Naive thymus-derived CD4-positive, alpha-beta T cell (primary cell): ENCODE measurements at regions of chr6 and their contacts with region 1.

Region 1: GRCh38 chr6:17258749-17259148 is 22.4 kb upstream of the RBM24 start:
- DNase-seq: no peak
- ATAC-seq: no peak
- H3K4me3 ChIP-seq: no peak overlapping the region
- H3K4me3 Mint-ChIP-seq: no peak overlapping the region
- H3K27ac ChIP-seq: no peak overlapping the region
- H3K27ac Mint-ChIP-seq: no peak overlapping the region
- H3K4me1 ChIP-seq: no peaks in the 10 kb centered on the region
- H3K4me1 Mint-ChIP-seq: no peaks in the 10 kb centered on the region
- H3K27me3 ChIP-seq: no peaks in the 10 kb centered on the region
- H3K27me3 Mint-ChIP-seq: peaks cover 2 to 27% (median 16%) of the 10 kb centered on the region in 5 donors

Region 2: DNA sequence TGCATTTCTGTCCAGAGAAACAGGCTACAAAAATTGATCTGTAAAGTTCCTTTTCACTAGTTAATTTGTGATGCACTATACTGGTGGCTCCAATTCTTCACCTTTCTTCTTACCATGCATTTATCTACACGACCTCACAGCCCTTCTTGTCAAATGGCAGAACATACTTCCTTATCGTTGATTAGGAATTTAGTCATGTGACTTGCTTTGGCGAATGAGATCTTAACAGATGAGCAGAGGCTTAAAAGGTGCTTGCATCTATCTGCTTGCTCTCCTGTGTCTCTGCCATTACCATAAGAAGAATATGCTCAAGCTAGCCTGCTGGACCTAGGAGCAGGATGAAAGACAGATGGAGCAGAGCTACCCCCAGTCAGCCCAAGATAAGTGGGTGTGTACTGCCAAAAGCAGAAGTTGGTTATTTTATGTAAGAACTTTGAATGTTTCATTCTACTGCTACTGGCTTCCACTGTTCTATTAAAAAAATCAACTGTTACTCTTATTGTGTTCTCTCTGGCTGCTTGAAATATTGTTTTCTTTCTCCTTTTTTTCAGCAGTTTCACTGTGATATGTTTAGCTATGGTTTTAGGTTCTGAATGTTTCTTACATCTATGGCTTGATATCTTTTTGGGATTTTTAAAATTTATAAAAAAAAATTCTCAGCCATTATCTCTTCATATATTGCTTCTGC is 17.8 kb before region 1 on chr6:
- CTCF ChIA-PET with region 1: no interaction called
- POLR2A ChIA-PET with region 1: no interaction called
- intact Hi-C with region 1: no loop called
- DNase-seq: no peak
- ATAC-seq: no peak
- H3K4me3 ChIP-seq: no peak overlapping the region
- H3K4me3 Mint-ChIP-seq: no peak overlapping the region
- H3K27ac ChIP-seq: no peak overlapping the region
- H3K27ac Mint-ChIP-seq: no peak overlapping the region
- H3K4me1 ChIP-seq: no peaks in the 10 kb centered on the region
- H3K4me1 Mint-ChIP-seq: peaks cover 0 to 1% (median 0%) of the 10 kb centered on the region in 7 donors
- H3K27me3 ChIP-seq: no peaks in the 10 kb centered on the region
- H3K27me3 Mint-ChIP-seq: peaks cover 2 to 22% (median 17%) of the 10 kb centered on the region in 5 donors

Region 3: DNA sequence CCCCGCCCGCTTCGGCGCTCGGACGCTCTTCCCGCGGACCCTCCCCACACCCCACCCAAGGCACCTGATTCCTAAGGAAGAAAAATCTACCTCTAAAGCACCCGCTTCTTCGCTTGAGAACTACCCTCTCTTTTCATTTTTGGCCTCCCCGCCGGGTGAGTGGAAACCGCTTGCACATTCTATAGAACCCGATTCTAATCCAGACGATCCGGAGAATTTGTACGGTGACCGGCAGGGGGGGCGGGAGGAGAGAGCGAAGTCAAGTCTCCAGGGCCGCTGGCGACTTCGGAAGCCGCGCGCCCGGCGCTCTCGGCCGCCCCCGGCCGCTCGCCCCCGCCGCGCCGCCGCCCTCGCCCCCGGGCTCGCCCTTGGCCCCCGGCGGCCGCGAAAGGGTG is 22.3 kb after region 1 on chr6 and contains the start of gene RBM24:
- CTCF ChIA-PET with region 1: no interaction called
- POLR2A ChIA-PET with region 1: interaction called, 13 read pairs
- intact Hi-C with region 1: no loop called
- DNase-seq: peak in 4 of 9 donors; percentile 3 to 32 (median 10)
- ATAC-seq: peak; percentile 50
- H3K4me3 ChIP-seq: no peak within 1 kb of the TSS
- H3K4me3 Mint-ChIP-seq: peak within 1 kb of the TSS; percentile 75 to 87 (median 80)
- H3K27ac ChIP-seq: no peak within 1 kb of the TSS
- H3K27ac Mint-ChIP-seq: peak within 1 kb of the TSS in 1 of 9 donors; percentile 46
- H3K4me1 ChIP-seq: no peaks in the 10 kb centered on the region
- H3K4me1 Mint-ChIP-seq: peaks cover 6 to 22% (median 14%) of the 10 kb centered on the region in 7 donors
- H3K27me3 ChIP-seq: peaks cover 0 to 10% of the 10 kb centered on the region in 2 donors
- H3K27me3 Mint-ChIP-seq: peaks cover 62 to 84% (median 77%) of the 10 kb centered on the region in 5 donors
- total RNA-seq, gene RBM24: not detected